ENCODE measurements at regions of chr22 and their contacts with region 1.

Region 1: GRCh38 chr22:18057568-18058209 is 20.1 kb upstream of the PEX26 start:
- DNase-seq: peak; percentile 83 to 86
- ATAC-seq: peak; percentile 79 to 88
- H3K4me3 ChIP-seq: no peak overlapping the region
- H3K27ac ChIP-seq: peak overlapping the region; percentile 84 to 94 (median 90)
- H3K4me1 ChIP-seq: peaks cover 33 to 38% of the 10 kb centered on the region in 2 donors
- H3K27me3 ChIP-seq: no peaks in the 10 kb centered on the region
- CTCF ChIP-seq: no peak
- POLR2A ChIP-seq: peak; percentile 63 to 81

Region 2: DNA sequence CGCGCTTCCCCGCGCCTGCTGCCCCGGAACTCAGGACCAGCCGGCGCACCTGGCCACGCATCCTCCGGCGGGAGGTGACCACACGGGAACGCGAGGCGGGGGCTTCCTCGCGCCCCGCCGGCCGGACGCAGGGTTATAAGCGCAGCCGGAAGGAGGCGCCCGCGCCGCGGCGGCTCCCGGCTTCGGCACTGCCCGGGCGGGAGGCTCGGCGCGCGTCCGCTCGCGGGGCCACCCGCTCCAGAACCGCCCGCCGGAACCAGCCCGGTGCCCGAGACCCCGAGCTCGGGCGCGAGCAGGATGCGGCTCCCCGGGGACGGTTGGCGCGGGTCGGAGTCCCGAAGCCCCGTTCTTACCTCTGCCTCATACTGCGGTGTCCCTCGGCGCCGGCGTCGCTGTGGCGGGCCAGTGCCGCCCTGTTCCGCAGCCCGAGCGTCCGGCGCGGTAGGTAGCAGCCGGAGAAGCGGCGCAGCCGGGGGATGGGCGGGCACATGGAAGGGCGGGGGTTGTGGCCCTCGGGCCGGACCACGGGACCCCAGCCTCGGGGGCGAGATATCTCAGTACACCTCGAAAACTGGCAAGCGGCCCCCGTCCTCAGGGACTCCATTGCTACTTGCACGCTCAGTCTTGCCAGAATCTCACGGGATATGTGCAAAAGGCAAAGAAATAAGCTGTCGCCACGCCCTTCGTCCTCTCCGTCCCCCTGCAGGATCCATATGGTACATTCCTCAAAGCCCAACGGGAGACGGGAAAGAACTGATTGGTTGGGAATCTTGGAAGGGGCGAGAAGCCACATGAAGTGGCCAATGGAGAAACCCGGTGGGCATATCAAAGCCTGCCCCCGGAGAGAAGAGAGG is 56.4 kb before region 1 on chr22:
- in situ Hi-C with region 1: no loop called
- intact Hi-C with region 1: no loop called
- DNase-seq: peak; percentile 84 to 92
- ATAC-seq: peak; percentile 95 to 96
- H3K4me3 ChIP-seq: peak overlapping the region; percentile 62 to 89 (median 76)
- H3K27ac ChIP-seq: peak overlapping the region; percentile 85 to 95 (median 92)
- H3K4me1 ChIP-seq: peaks cover 15 to 24% of the 10 kb centered on the region in 2 donors
- H3K27me3 ChIP-seq: no peaks in the 10 kb centered on the region
- CTCF ChIP-seq: peak; percentile 46 to 82 (median 79)
- POLR2A ChIP-seq: peak; percentile 84 to 89

Region 3: GRCh38 chr22:18012531-18012930 is 45.2 kb before region 1 on chr22:
- in situ Hi-C with region 1: loop called in 1 of 4 experiments (anchors 10 kb)
- intact Hi-C with region 1: no loop called
- DNase-seq: no peak
- ATAC-seq: peak; percentile 54 to 64
- H3K4me3 ChIP-seq: no peak overlapping the region
- H3K27ac ChIP-seq: no peak overlapping the region
- H3K4me1 ChIP-seq: peaks cover 0 to 2% of the 10 kb centered on the region in 2 donors
- H3K27me3 ChIP-seq: no peaks in the 10 kb centered on the region
- CTCF ChIP-seq: no peak
- POLR2A ChIP-seq: no peak

Region 4: GRCh38 chr22:18035740-18036139 is 21.9 kb before region 1 on chr22:
- in situ Hi-C with region 1: no loop called
- intact Hi-C with region 1: loop called (anchors 2 kb)
- DNase-seq: peak; percentile 88 to 98
- ATAC-seq: peak; percentile 78 to 91
- H3K4me3 ChIP-seq: no peak overlapping the region
- H3K27ac ChIP-seq: peak overlapping the region; percentile 83 to 94 (median 88)
- H3K4me1 ChIP-seq: peaks cover 40 to 41% of the 10 kb centered on the region in 2 donors
- H3K27me3 ChIP-seq: no peaks in the 10 kb centered on the region
- CTCF ChIP-seq: no peak
- POLR2A ChIP-seq: peak in 1 of 2 donors; percentile 38

Measured in gastrocnemius medialis (tissue), 4 donors.